CD4-positive, alpha-beta memory T cell (primary cell): ENCODE measurements at regions of chr10 and their contacts with region 1.

Region 1: DNA sequence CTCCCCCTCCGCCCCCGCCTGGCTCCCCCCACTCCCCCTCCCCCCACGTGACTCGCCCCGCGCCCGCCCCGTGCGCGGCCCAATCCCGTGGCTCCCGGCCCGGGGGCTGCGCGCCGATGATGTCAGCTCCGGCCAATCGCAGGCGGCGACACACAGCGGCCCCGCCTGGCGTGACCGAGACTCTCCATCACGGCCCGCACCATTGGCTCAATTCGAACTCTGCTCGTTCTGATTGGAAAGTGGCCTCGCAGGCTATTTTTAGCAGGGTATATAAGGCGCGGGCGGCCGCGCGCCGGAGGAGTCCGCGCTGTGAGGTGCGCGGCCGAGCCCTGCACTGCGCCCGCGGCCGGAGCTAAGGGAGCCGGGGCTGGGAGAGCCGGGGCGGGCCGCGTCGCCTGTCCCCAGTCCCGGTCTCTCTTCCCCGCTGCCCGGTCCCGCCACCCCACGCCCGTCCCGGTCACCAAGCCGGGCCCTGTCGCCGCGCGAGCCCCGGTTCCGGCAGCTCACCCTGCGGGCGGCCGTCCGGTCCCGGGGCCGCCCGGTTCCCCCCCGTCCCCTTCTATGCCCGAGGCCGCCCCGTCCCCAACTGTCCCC is 345 bp upstream of the KLF6 start:
- DNase-seq: peak; percentile 99 to 100 (median 100)
- H3K4me3 ChIP-seq: peak overlapping the region; percentile 75 to 95
- H3K4me3 Mint-ChIP-seq: peak overlapping the region; percentile 90 to 99 (median 96)
- H3K27ac ChIP-seq: peak overlapping the region; percentile 97
- H3K27ac Mint-ChIP-seq: peak overlapping the region; percentile 98 to 100 (median 98)
- H3K4me1 ChIP-seq: peaks cover 23% of the 10 kb centered on the region
- H3K4me1 Mint-ChIP-seq: peaks cover 8 to 55% (median 24%) of the 10 kb centered on the region in 4 donors
- H3K27me3 ChIP-seq: no peaks in the 10 kb centered on the region
- H3K27me3 Mint-ChIP-seq: peaks cover 0 to 2% of the 10 kb centered on the region in 2 donors

Region 2: DNA sequence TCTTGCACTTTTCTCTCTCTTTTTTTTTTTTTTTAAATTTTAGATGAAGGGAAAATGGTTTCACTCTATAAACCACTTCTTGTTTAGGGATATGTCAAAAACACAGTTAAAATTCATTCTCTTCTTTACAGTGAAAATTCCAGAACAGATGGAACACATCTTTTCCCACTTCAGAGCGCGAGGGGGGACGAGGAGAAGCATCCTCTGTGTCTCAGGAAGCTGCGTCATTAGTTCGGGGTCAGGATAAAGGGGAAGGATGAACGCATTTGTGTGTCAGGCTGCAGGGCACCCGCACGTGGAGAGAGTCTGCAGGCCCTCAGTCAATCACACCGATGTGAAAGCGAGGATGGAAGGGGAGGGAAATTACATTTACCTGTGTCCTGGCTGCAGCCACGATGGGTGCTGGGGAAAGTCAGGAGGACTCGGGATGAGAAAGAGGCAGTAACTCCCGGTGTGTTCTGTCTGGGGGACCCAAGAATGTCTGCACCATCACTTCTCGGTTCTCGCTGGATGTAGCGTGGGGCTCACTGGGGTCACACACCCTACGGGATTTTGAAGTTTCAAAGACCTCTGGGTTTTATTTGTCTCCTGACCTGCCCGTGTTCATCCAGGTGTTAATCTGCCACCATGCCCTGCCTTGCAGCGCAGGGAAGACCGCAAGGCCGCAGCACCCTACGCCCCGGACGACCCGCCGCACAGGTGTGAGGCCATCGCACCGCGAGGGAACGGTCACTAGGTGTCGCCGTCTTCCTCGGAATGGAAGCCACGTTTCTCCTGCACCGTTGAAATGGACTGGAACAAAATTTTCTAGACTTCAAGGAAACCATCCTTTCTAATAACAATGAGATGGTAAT is 546.1 kb before region 1 on chr10:
- CTCF ChIA-PET with region 1: no interaction called
- POLR2A ChIA-PET with region 1: no interaction called
- intact Hi-C with region 1: loop called (anchors 5 kb)
- DNase-seq: peak; percentile 62 to 73 (median 64)
- H3K4me3 ChIP-seq: no peak overlapping the region
- H3K4me3 Mint-ChIP-seq: peak overlapping the region in 2 of 8 donors; percentile 45 to 77
- H3K27ac ChIP-seq: no peak overlapping the region
- H3K27ac Mint-ChIP-seq: peak overlapping the region in 3 of 7 donors; percentile 61 to 84 (median 67)
- H3K4me1 ChIP-seq: no peaks in the 10 kb centered on the region
- H3K4me1 Mint-ChIP-seq: peaks cover 0 to 9% (median 5%) of the 10 kb centered on the region in 4 donors
- H3K27me3 ChIP-seq: no peaks in the 10 kb centered on the region
- H3K27me3 Mint-ChIP-seq: peaks cover 0 to 2% of the 10 kb centered on the region in 2 donors

Region 3: GRCh38 chr10:3578159-3578558 is 207.2 kb before region 1 on chr10:
- CTCF ChIA-PET with region 1: no interaction called
- POLR2A ChIA-PET with region 1: no interaction called
- intact Hi-C with region 1: no loop called
- DNase-seq: no peak
- H3K4me3 ChIP-seq: no peak overlapping the region
- H3K4me3 Mint-ChIP-seq: no peak overlapping the region
- H3K27ac ChIP-seq: no peak overlapping the region
- H3K27ac Mint-ChIP-seq: no peak overlapping the region
- H3K4me1 ChIP-seq: no peaks in the 10 kb centered on the region
- H3K4me1 Mint-ChIP-seq: peaks cover 6 to 15% (median 8%) of the 10 kb centered on the region in 4 donors
- H3K27me3 ChIP-seq: no peaks in the 10 kb centered on the region
- H3K27me3 Mint-ChIP-seq: no peaks in the 10 kb centered on the region

Region 4: DNA sequence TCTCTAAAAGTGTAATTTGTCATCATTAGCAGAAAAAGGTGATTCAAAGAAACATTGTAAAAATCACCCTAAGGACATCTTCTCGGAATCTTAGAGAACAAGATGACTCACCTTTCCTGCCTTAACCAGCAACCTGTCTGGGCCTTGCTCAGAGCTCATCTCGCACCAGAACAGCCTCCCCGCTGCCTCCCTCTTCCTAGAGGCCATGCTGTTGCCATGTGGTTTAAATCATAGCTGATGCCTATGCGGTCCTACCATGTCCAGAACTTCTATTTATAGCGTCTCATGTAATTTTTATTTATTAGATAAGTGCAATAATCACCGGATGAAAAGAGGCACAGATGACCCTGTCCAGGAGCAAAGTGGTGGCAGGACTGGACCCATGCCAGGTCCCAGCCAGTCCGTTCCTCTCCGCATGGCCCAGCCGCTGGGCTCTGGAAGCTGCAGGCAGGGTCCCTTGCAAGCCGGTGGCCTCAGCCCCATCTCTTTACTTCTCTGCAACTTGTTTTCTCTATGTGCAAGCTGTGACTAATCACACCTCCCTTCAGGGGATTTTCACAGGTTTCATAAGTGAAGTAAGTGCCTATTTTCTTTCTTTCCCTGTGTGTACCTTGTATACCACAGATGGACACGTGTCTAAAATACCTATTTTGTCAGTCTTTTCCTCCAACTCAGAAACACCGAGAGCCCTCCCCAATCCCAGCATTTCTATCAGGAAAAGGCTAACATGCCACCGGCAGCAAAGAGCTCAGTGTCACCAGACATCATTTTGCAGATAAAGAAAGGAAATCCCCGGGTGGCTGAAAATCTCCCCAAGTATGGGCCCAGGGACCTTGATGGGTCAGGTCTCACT is 27.5 kb before region 1 on chr10:
- CTCF ChIA-PET with region 1: interaction called, 6 read pairs
- POLR2A ChIA-PET with region 1: interaction called, 201 read pairs
- intact Hi-C with region 1: no loop called
- DNase-seq: peak; percentile 43 to 90 (median 46)
- H3K4me3 ChIP-seq: peak overlapping the region in 1 of 2 donors; percentile 1
- H3K4me3 Mint-ChIP-seq: peak overlapping the region; percentile 26 to 90 (median 72)
- H3K27ac ChIP-seq: peak overlapping the region; percentile 74
- H3K27ac Mint-ChIP-seq: peak overlapping the region; percentile 93 to 98 (median 97)
- H3K4me1 ChIP-seq: peaks cover 81% of the 10 kb centered on the region
- H3K4me1 Mint-ChIP-seq: peaks cover 41 to 81% (median 61%) of the 10 kb centered on the region in 4 donors
- H3K27me3 ChIP-seq: no peaks in the 10 kb centered on the region
- H3K27me3 Mint-ChIP-seq: no peaks in the 10 kb centered on the region

Region 5: DNA sequence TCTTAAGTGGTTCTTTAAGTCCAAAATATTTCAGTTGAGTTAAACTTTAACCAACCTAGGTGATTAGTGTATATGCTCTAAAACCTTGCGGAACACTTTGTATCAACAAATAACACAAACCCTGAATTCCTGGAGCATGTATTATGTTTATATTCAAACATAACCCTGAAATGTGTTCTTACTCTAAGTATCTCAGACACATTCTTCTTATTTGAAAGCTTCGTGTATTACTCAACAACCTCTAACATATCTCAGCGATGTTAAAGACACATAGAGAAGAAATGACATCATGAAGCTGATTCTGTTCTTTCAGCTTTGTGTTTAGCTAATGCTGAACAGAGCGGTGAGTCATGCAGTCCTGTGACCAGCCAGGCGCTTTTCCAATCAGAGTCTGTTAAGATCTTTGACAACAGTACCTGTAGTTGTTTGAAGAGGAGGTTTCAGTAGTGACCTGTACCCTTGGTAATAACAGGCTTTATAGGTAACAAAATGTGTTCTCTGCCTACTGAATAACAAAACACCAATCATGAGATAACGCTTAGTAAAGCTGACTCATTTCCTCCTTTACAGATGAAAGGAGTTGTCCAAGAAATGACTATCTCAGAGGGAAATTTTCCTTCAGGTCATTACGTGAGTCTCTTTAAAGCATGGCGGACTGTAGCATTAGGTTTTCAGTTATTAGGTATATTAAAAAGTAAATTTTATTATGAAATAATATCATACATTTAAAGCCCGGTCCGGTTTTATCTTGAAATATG is 67.0 kb after region 1 on chr10:
- CTCF ChIA-PET with region 1: interaction called, 5 read pairs
- POLR2A ChIA-PET with region 1: interaction called, 253 read pairs
- intact Hi-C with region 1: loop called (anchors 1 kb)
- DNase-seq: peak; percentile 64 to 95 (median 79)
- H3K4me3 ChIP-seq: no peak overlapping the region
- H3K4me3 Mint-ChIP-seq: peak overlapping the region in 6 of 8 donors; percentile 17 to 72 (median 60)
- H3K27ac ChIP-seq: peak overlapping the region; percentile 59
- H3K27ac Mint-ChIP-seq: peak overlapping the region; percentile 81 to 98 (median 92)
- H3K4me1 ChIP-seq: peaks cover 29% of the 10 kb centered on the region
- H3K4me1 Mint-ChIP-seq: peaks cover 15 to 45% (median 30%) of the 10 kb centered on the region in 4 donors
- H3K27me3 ChIP-seq: no peaks in the 10 kb centered on the region
- H3K27me3 Mint-ChIP-seq: no peaks in the 10 kb centered on the region

Region 6: GRCh38 chr10:3935141-3935540 is 149.8 kb after region 1 on chr10:
- CTCF ChIA-PET with region 1: interaction called, 3 read pairs
- POLR2A ChIA-PET with region 1: interaction called, 248 read pairs
- intact Hi-C with region 1: no loop called
- DNase-seq: peak; percentile 57 to 68 (median 63)
- H3K4me3 ChIP-seq: peak overlapping the region in 1 of 2 donors; percentile 56
- H3K4me3 Mint-ChIP-seq: peak overlapping the region; percentile 84 to 94 (median 90)
- H3K27ac ChIP-seq: peak overlapping the region; percentile 61
- H3K27ac Mint-ChIP-seq: peak overlapping the region; percentile 85 to 99 (median 97)
- H3K4me1 ChIP-seq: peaks cover 20% of the 10 kb centered on the region
- H3K4me1 Mint-ChIP-seq: peaks cover 26 to 37% (median 28%) of the 10 kb centered on the region in 4 donors
- H3K27me3 ChIP-seq: no peaks in the 10 kb centered on the region
- H3K27me3 Mint-ChIP-seq: no peaks in the 10 kb centered on the region

Region 7: GRCh38 chr10:3980660-3981059 is 195.3 kb after region 1 on chr10:
- CTCF ChIA-PET with region 1: no interaction called
- POLR2A ChIA-PET with region 1: interaction called, 179 read pairs
- intact Hi-C with region 1: loop called (anchors 10 kb)
- DNase-seq: peak in 4 of 5 donors; percentile 29 to 52 (median 31)
- H3K4me3 ChIP-seq: no peak overlapping the region
- H3K4me3 Mint-ChIP-seq: peak overlapping the region; percentile 10 to 81 (median 68)
- H3K27ac ChIP-seq: peak overlapping the region; percentile 0
- H3K27ac Mint-ChIP-seq: peak overlapping the region in 6 of 7 donors; percentile 54 to 92 (median 77)
- H3K4me1 ChIP-seq: peaks cover 74% of the 10 kb centered on the region
- H3K4me1 Mint-ChIP-seq: peaks cover 0 to 42% (median 14%) of the 10 kb centered on the region in 4 donors
- H3K27me3 ChIP-seq: no peaks in the 10 kb centered on the region
- H3K27me3 Mint-ChIP-seq: no peaks in the 10 kb centered on the region

Region 8: DNA sequence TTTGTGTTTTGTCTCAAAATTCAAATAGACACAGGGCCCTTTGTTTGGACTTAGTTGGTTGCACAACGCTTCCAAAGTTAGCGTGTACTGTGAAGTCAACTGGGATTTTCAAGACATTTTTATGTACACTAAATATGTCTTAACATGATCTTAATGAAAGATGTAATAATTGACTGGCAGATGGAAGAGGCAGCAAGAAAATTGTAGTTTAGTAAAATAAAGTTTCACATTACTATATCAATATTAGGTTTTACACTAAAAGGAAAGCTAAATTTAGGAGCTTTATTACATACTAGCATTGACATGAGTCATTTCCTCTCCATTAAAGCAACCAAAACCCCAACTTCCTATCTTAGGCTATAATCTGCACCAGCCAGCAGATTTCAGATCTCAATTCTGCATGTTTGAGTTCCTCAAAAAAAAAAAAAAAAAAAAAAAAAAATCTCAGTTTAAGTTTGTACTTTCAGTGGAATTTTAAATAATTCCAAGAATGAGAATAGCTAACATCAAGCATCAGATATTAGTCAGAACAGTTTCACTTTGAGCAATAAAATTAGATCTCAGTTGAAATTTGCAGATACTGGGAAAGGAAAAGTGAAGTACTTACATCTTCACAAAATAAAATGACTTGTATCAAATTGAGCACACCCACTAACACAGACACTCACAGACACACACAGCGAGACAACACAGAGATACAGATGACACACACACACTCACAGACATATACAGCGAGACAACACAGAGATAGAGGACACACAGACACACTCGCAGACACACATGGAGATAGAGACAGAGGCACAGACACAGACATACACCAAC is 346.3 kb after region 1 on chr10:
- CTCF ChIA-PET with region 1: interaction called, 3 read pairs
- POLR2A ChIA-PET with region 1: interaction called, 55 read pairs
- intact Hi-C with region 1: loop called (anchors 5 kb)
- DNase-seq: peak; percentile 74 to 84 (median 81)
- H3K4me3 ChIP-seq: peak overlapping the region; percentile 15 to 30
- H3K4me3 Mint-ChIP-seq: no peak overlapping the region
- H3K27ac ChIP-seq: peak overlapping the region; percentile 46
- H3K27ac Mint-ChIP-seq: no peak overlapping the region
- H3K4me1 ChIP-seq: peaks cover 62% of the 10 kb centered on the region
- H3K4me1 Mint-ChIP-seq: peaks cover 25 to 41% (median 38%) of the 10 kb centered on the region in 4 donors
- H3K27me3 ChIP-seq: no peaks in the 10 kb centered on the region
- H3K27me3 Mint-ChIP-seq: no peaks in the 10 kb centered on the region